CD8-positive, alpha-beta T cell (primary cell): ENCODE measurements at regions of chr5 and their contacts with region 1.

Region 1: DNA sequence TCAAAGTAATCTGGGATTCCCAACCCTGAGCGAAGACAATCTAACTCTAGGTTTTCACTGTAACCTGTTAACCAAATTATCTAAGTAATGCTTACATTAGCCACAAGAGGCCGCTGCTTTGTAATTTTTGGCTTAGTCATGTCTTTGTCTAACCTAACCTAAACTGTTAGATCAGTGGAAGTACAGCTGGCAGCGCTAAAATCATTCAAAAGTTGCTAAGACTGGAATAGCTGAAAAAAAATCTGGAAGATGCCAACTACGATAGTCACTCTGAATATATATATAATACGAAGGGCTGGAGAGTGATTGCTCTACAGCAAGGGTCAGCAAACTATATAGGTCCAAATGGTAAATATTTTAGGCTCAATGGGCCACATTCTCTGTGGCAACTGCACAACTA is 60.2 kb downstream of the FBXO38 start:
- DNase-seq: peak in 7 of 9 experiments; percentile 12 to 65 (median 45)
- ATAC-seq: peak; percentile 77
- H3K4me3 ChIP-seq: no peak overlapping the region
- H3K4me3 Mint-ChIP-seq: no peak overlapping the region
- H3K27ac ChIP-seq: no peak overlapping the region
- H3K27ac Mint-ChIP-seq: no peak overlapping the region
- H3K4me1 ChIP-seq: no peaks in the 10 kb centered on the region
- H3K4me1 Mint-ChIP-seq: peaks cover 2% of the 10 kb centered on the region
- H3K27me3 ChIP-seq: no peaks in the 10 kb centered on the region
- H3K27me3 Mint-ChIP-seq: no peaks in the 10 kb centered on the region
- CTCF ChIP-seq: peak; percentile 87

Region 2: DNA sequence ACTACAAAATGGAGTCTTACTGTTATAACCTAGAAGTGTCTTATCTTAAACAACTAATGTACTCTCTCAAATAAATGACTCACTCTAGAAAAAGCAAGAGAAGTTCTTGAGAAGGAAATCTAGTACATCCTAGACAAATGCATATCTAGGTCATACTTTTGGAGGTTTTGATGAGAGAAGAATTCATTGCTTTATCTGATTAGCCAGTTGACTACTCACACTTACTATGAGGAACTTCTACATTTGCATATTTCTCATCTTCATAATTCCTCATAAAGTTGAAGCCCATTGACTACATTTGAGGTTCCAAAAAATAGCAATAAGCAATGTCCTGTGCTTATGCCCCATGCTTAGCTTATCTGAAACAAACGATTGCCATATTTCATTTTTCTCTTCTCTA is 664.3 kb before region 1 on chr5:
- CTCF ChIA-PET with region 1: no interaction called
- POLR2A ChIA-PET with region 1: no interaction called
- intact Hi-C with region 1: no loop called
- DNase-seq: no peak
- ATAC-seq: no peak
- H3K4me3 ChIP-seq: no peak overlapping the region
- H3K4me3 Mint-ChIP-seq: no peak overlapping the region
- H3K27ac ChIP-seq: no peak overlapping the region
- H3K27ac Mint-ChIP-seq: no peak overlapping the region
- H3K4me1 ChIP-seq: peaks cover 11% of the 10 kb centered on the region
- H3K4me1 Mint-ChIP-seq: peaks cover 31% of the 10 kb centered on the region
- H3K27me3 ChIP-seq: no peaks in the 10 kb centered on the region
- H3K27me3 Mint-ChIP-seq: no peaks in the 10 kb centered on the region
- CTCF ChIP-seq: no peak

Region 3: DNA sequence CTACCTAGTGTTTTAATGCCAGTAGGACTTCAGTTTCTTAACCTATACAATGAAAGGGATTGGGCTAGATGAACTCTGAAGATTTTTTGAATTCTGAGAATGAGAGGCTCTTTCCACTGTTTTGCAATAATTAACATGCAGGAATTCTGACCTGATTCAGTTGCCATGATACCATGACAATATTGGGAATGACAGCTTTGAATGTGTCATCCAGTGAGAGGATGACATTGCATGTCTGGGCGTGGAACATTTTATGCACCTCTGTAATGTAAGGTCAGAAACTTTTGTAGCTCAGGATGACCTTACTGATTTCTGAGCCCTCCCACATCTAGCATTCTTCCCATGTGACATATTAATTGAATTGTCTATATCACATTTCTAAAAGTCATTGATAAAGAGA is 410.9 kb before region 1 on chr5:
- CTCF ChIA-PET with region 1: no interaction called
- POLR2A ChIA-PET with region 1: no interaction called
- intact Hi-C with region 1: no loop called
- DNase-seq: no peak
- ATAC-seq: no peak
- H3K4me3 ChIP-seq: no peak overlapping the region
- H3K4me3 Mint-ChIP-seq: no peak overlapping the region
- H3K27ac ChIP-seq: no peak overlapping the region
- H3K27ac Mint-ChIP-seq: no peak overlapping the region
- H3K4me1 ChIP-seq: no peaks in the 10 kb centered on the region
- H3K4me1 Mint-ChIP-seq: no peaks in the 10 kb centered on the region
- H3K27me3 ChIP-seq: no peaks in the 10 kb centered on the region
- H3K27me3 Mint-ChIP-seq: no peaks in the 10 kb centered on the region
- CTCF ChIP-seq: no peak

Region 4: GRCh38 chr5:149114403-149115312 is 670.7 kb after region 1 on chr5:
- CTCF ChIA-PET with region 1: no interaction called
- POLR2A ChIA-PET with region 1: no interaction called
- intact Hi-C with region 1: loop called (anchors 5 to 10 kb)
- DNase-seq: peak in 8 of 9 experiments; percentile 8 to 58 (median 38)
- ATAC-seq: no peak
- H3K4me3 ChIP-seq: no peak overlapping the region
- H3K4me3 Mint-ChIP-seq: no peak overlapping the region
- H3K27ac ChIP-seq: no peak overlapping the region
- H3K27ac Mint-ChIP-seq: no peak overlapping the region
- H3K4me1 ChIP-seq: no peaks in the 10 kb centered on the region
- H3K4me1 Mint-ChIP-seq: no peaks in the 10 kb centered on the region
- H3K27me3 ChIP-seq: peaks cover 0 to 9% of the 10 kb centered on the region in 2 experiments
- H3K27me3 Mint-ChIP-seq: peaks cover 20% of the 10 kb centered on the region
- CTCF ChIP-seq: no peak